ENCODE measurements at regions of chr2 and their contacts with region 1.

Region 1: DNA sequence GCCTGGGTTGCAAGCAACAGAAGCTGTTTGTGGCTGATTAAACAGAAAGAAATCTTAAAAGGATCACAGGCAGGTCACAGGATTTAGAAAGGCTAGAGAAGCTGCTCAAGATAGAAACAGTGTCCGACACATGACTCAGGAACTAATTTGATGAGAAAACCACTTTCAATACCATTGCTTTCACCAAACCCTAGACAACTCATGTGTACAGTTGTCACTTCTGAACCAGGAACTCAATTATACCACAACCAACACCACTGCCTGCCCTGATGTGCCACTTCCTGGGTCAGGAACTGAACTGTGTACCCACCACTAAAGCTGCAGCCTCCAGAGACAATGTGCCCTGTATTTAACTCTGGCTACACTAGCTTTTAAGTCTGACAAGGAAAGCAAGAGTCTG is 56.0 kb downstream of the TMEM247 start:
- DNase-seq: no peak
- H3K4me3 ChIP-seq: no peak overlapping the region
- H3K27ac ChIP-seq: no peak overlapping the region
- H3K4me1 ChIP-seq: peaks cover 2% of the 10 kb centered on the region
- H3K27me3 ChIP-seq: no peaks in the 10 kb centered on the region
- CTCF ChIP-seq: no peak
- EP300 ChIP-seq: no peak
- POLR2A ChIP-seq: no peak

Region 2: DNA sequence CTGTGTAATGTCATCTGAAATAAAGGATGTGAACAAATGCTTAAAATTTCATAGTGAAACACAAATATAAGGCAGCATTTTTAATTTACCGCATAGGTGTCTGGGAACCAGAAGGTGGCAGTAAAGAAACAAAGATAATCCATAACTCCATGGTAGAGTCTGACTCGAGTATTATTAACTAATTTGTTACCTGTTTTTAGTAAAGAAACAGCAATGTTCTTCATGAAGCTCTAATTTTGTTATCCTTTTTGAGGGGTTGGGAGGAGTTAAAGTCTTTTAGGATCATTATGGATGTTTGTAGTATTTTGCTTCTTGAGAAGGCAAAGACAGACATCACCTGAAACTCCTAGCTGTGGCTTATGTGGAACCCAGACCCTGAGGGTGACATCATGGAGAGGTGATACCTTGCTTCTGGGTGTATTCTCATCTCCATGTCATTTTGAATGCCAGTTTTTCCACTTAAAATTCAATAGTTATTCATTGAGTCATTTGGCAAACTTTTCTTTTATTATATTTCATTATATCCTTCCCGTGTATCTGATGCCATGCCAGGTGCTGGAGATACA is 524.4 kb before region 1 on chr2:
- intact Hi-C with region 1: no loop called
- DNase-seq: no peak
- H3K4me3 ChIP-seq: no peak overlapping the region
- H3K27ac ChIP-seq: no peak overlapping the region
- H3K4me1 ChIP-seq: no peaks in the 10 kb centered on the region
- H3K27me3 ChIP-seq: no peaks in the 10 kb centered on the region
- CTCF ChIP-seq: peak; percentile 48 to 60 (median 54)
- EP300 ChIP-seq: no peak
- POLR2A ChIP-seq: no peak

Region 3: GRCh38 chr2:46327632-46328031 is 207.7 kb before region 1 on chr2:
- intact Hi-C with region 1: no loop called
- DNase-seq: no peak
- H3K4me3 ChIP-seq: no peak overlapping the region
- H3K27ac ChIP-seq: no peak overlapping the region
- H3K4me1 ChIP-seq: peaks cover 30% of the 10 kb centered on the region
- H3K27me3 ChIP-seq: no peaks in the 10 kb centered on the region
- CTCF ChIP-seq: no peak
- EP300 ChIP-seq: no peak
- POLR2A ChIP-seq: no peak

Region 4: GRCh38 chr2:46487667-46488333 is 47.6 kb before region 1 on chr2:
- intact Hi-C with region 1: loop called in 1 of 4 experiments (anchors 10 kb)
- DNase-seq: peak; percentile 47 to 77 (median 57)
- H3K4me3 ChIP-seq: no peak overlapping the region
- H3K27ac ChIP-seq: no peak overlapping the region
- H3K4me1 ChIP-seq: peaks cover 8% of the 10 kb centered on the region
- H3K27me3 ChIP-seq: no peaks in the 10 kb centered on the region
- CTCF ChIP-seq: no peak
- EP300 ChIP-seq: no peak
- POLR2A ChIP-seq: no peak

Measured in ovary (tissue), 10 donors.